Activated CD4-positive, alpha-beta T cell treated with anti-CD3 and anti-CD28 coated beads, Interleukin-2, amount 10 ng/mL, durations not matched to agents 24 days and 14 days (primary cell): ENCODE measurements at regions of chr6 and their contacts with region 1.

Region 1: GRCh38 chr6:56359201-56359899 is 112.0 kb upstream of the COL21A1 start:
- DNase-seq: peak; percentile 86
- H3K4me3 Mint-ChIP-seq: no peak overlapping the region
- H3K27ac Mint-ChIP-seq: no peak overlapping the region
- H3K4me1 Mint-ChIP-seq: no peaks in the 10 kb centered on the region
- H3K27me3 Mint-ChIP-seq: peaks cover 1% of the 10 kb centered on the region

Region 2: GRCh38 chr6:56570413-56571359 is 211.3 kb after region 1 on chr6:
- intact Hi-C with region 1: loop called (anchors 1 kb)
- DNase-seq: peak; percentile 60
- H3K4me3 Mint-ChIP-seq: no peak overlapping the region
- H3K27ac Mint-ChIP-seq: no peak overlapping the region
- H3K4me1 Mint-ChIP-seq: no peaks in the 10 kb centered on the region
- H3K27me3 Mint-ChIP-seq: no peaks in the 10 kb centered on the region

Region 3: DNA sequence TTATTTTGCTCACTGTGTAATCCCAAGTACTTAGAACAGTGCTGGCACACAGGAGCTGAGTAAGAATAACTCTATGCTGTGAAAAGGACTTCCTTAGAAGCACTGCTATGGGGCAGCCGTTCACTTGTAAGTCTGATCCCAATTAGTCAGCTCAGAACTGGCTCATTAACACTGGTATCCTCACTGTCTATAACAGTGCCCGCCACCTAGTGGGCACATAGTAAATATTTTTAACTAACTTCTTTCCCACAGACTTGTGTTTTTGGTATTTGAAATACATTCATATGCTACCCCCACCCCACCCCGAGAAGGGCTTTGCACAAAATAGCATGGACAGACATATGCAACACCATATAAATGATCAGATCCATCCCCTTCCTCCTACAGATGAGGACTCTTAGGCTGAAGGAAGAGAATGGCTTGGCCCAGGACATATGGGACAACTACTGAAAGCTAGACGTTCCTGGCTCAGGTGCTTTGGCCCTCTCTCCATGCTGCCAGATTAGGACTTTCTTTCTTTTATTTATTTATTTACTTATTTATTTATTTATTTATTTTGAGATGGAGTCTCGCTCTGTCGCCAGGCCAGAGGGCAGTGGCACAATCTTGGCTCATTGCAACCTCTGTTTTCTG is 236.3 kb after region 1 on chr6:
- intact Hi-C with region 1: loop called (anchors 1 kb)
- DNase-seq: peak; percentile 79
- H3K4me3 Mint-ChIP-seq: no peak overlapping the region
- H3K27ac Mint-ChIP-seq: peak overlapping the region; percentile 2
- H3K4me1 Mint-ChIP-seq: peaks cover 26% of the 10 kb centered on the region
- H3K27me3 Mint-ChIP-seq: no peaks in the 10 kb centered on the region

Region 4: DNA sequence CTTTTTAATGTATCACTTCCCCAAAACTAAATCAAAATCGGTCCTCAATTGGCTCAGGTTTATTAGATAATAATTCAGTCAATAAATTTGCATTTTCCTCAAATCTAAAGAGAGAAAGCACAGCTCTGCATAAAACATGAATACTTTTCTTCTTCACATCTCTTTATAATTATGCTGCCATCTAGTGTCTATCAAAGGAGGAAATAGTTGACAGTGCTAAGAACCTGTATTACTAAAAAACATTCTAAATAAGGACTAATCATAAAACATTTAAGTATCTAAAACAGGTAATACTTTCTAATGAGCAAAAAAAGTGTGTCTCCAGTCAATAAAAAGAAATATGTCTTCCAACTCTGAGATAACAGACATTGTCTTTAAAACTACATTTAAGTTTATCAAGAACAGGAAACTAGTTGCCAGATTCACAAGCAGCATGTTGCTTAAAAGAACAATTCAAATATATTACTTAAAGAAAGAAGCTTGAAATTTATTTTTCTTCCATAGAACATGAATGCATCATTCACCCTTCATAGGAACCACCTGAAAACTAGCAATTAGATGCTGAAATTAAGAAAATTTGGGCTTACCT is 339.8 kb after region 1 on chr6:
- intact Hi-C with region 1: loop called (anchors 5 kb)
- DNase-seq: no peak
- H3K4me3 Mint-ChIP-seq: no peak overlapping the region
- H3K27ac Mint-ChIP-seq: no peak overlapping the region
- H3K4me1 Mint-ChIP-seq: no peaks in the 10 kb centered on the region
- H3K27me3 Mint-ChIP-seq: peaks cover 6% of the 10 kb centered on the region

Region 5: GRCh38 chr6:56851541-56852259 is 492.4 kb after region 1 on chr6:
- intact Hi-C with region 1: loop called (anchors 5 kb)
- DNase-seq: peak; percentile 83
- H3K4me3 Mint-ChIP-seq: peak overlapping the region; percentile 85
- H3K27ac Mint-ChIP-seq: peak overlapping the region; percentile 81
- H3K4me1 Mint-ChIP-seq: peaks cover 25% of the 10 kb centered on the region
- H3K27me3 Mint-ChIP-seq: peaks cover 23% of the 10 kb centered on the region